Vagina (tissue), 2 donors: ENCODE measurements at regions of chr17 and their contacts with region 1.

Region 1: DNA sequence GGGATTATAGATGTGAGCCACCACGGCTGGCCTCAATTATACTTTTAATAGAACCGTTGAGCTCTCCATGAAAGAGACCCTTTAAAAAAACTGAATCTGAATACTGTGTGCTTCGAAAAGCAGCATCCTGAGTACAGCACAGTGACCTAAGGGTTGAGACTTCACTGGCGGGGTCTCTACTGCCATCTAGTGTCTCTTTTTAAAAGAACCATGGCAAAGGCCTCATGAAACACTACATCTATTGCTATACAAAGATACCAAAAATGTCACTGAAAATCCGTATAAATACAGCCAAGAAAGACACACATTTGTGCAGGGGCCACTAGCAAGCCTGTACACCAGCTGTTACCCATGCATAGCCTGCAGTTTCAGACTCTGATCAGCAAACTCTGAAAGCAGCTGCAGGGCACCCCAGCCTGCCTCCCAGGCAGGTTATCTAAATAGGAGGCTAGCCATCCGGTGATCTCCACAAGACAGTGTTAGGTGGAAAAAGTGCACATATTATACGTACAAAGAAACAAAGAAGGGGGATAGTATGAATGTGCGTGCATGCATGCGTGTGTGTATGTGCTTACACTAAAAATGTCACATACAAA is 35.3 kb downstream of the NPLOC4 start:
- DNase-seq: no peak
- H3K4me3 ChIP-seq: no peak overlapping the region
- H3K27ac ChIP-seq: no peak overlapping the region
- H3K4me1 ChIP-seq: peaks cover 5% of the 10 kb centered on the region
- H3K27me3 ChIP-seq: no peaks in the 10 kb centered on the region
- CTCF ChIP-seq: peak; percentile 29 to 64 (median 56)
- POLR2A ChIP-seq: no peak

Region 2: DNA sequence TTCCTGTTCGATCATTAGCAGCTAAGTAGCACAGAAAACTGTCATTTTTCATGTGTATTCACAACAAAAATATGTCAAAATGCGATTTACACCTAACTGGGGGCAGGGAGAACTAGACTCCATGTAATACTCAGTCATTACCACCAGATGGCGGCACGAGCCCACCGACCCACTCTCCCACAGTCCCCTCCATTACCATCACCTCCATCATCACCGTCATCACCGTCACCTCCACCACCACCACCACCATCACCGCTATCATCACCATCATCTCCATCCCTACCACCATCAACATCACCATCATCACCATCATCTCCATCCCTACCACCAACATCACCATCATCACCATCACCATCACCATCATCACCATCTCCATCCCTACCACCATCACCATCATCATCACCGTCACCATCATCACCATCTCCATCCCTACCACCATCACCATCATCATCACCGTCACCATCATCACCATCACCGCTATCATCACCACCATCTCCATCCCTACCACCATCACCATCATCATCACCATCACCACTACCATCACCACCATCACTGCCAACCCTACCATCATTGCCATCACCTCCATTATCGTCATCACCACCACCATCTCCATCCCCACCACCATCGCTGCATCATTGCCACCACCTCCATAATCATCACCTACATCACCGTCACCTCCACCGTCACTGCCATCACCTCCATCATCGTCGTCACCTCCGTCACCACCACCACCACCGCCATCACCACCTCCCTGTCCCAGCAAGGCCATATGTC is 348.1 kb before region 1 on chr17:
- intact Hi-C with region 1: loop called (anchors 10 kb)
- DNase-seq: no peak
- H3K4me3 ChIP-seq: no peak overlapping the region
- H3K27ac ChIP-seq: no peak overlapping the region
- H3K4me1 ChIP-seq: peaks cover 24% of the 10 kb centered on the region
- H3K27me3 ChIP-seq: no peaks in the 10 kb centered on the region
- CTCF ChIP-seq: peak; percentile 82 to 97 (median 90)
- POLR2A ChIP-seq: no peak

Region 3: GRCh38 chr17:81510798-81511553 is 90.6 kb before region 1 on chr17:
- intact Hi-C with region 1: no loop called
- DNase-seq: no peak
- H3K4me3 ChIP-seq: peak overlapping the region; percentile 93 to 99
- H3K27ac ChIP-seq: peak overlapping the region; percentile 98
- H3K4me1 ChIP-seq: peaks cover 39% of the 10 kb centered on the region
- H3K27me3 ChIP-seq: no peaks in the 10 kb centered on the region
- CTCF ChIP-seq: no peak
- POLR2A ChIP-seq: no peak

Region 4: GRCh38 chr17:81537343-81537855 is 64.2 kb before region 1 on chr17:
- intact Hi-C with region 1: no loop called
- DNase-seq: no peak
- H3K4me3 ChIP-seq: no peak overlapping the region
- H3K27ac ChIP-seq: no peak overlapping the region
- H3K4me1 ChIP-seq: peaks cover 19% of the 10 kb centered on the region
- H3K27me3 ChIP-seq: no peaks in the 10 kb centered on the region
- CTCF ChIP-seq: peak in 2 of 3 experiments; percentile 20 to 33
- POLR2A ChIP-seq: no peak

Region 5: GRCh38 chr17:81558941-81559806 is 42.4 kb before region 1 on chr17:
- intact Hi-C with region 1: loop called (anchors 5 kb)
- DNase-seq: no peak
- H3K4me3 ChIP-seq: no peak overlapping the region
- H3K27ac ChIP-seq: no peak overlapping the region
- H3K4me1 ChIP-seq: no peaks in the 10 kb centered on the region
- H3K27me3 ChIP-seq: no peaks in the 10 kb centered on the region
- CTCF ChIP-seq: no peak
- POLR2A ChIP-seq: no peak